ENCODE measurements at regions of chr16 and their contacts with region 1.

Region 1: DNA sequence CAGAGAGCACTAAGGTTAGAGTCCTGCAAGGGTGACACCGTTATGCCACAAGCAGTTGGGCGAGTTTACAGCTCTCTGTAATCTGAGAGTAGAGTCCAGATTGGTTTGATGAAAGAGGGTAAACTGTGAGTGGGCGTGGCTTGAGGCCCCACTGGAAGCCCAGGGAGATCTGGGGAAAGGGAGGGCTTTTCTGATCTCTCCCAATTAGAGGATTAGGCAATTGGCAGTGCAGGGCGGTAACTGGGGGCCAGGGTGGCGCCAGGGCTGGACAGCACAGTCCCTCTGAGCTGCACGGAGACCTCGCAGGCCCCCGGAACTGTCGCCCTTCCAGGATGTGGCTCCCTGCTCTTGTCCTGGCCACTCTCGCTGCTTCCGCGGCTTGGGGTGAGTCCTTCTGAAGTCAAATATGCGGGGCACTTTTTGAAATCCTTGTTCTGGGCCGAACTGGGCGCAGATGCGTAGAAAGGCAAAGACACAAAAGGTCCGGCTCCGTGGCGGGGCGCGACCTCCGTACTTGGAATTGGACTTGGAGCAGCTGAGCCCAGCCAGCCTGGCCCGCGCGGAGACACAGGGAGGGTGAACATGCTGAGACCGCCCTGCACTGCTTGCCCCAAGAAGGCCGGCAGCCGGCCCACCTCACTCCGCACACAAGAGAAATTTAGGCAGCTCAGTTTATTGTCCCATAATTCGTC is 72.4 kb downstream of the CES1 start:
- DNase-seq: peak in 3 of 5 donors; percentile 26 to 74 (median 26)
- ATAC-seq: peak; percentile 4 to 80 (median 66)
- H3K4me3 ChIP-seq: peak overlapping the region in 7 of 12 donors; percentile 12 to 41 (median 20)
- H3K27ac ChIP-seq: peak overlapping the region in 6 of 12 donors; percentile 48 to 64 (median 56)
- H3K4me1 ChIP-seq: peaks cover 0 to 12% (median 0%) of the 10 kb centered on the region in 12 donors
- H3K27me3 ChIP-seq: peaks cover 0 to 2% (median 0%) of the 10 kb centered on the region in 9 donors
- CTCF ChIP-seq: no peak
- POLR2A ChIP-seq: no peak

Region 2: GRCh38 chr16:55832758-55833540 is 72.5 kb after region 1 on chr16 and contains the start of gene CES1:
- intact Hi-C with region 1: loop called in 4 of 10 experiments (anchors 2 to 5 kb)
- DNase-seq: peak in 4 of 5 donors; percentile 39 to 88 (median 62)
- ATAC-seq: peak; percentile 69 to 90 (median 77)
- H3K4me3 ChIP-seq: peak within 1 kb of the TSS in 9 of 12 donors; percentile 15 to 46 (median 36)
- H3K27ac ChIP-seq: peak within 1 kb of the TSS in 8 of 12 donors; percentile 12 to 70 (median 44)
- H3K4me1 ChIP-seq: peaks cover 0 to 23% (median 0%) of the 10 kb centered on the region in 12 donors
- H3K27me3 ChIP-seq: no peaks in the 10 kb centered on the region
- CTCF ChIP-seq: no peak
- POLR2A ChIP-seq: no peak
- total RNA-seq, gene CES1: 7.3 to 31.3 (median 20.6) TPM

Measured in heart left ventricle (tissue), 16 donors.